ENCODE measurements at regions of chr3 and their contacts with region 1.

Region 1: DNA sequence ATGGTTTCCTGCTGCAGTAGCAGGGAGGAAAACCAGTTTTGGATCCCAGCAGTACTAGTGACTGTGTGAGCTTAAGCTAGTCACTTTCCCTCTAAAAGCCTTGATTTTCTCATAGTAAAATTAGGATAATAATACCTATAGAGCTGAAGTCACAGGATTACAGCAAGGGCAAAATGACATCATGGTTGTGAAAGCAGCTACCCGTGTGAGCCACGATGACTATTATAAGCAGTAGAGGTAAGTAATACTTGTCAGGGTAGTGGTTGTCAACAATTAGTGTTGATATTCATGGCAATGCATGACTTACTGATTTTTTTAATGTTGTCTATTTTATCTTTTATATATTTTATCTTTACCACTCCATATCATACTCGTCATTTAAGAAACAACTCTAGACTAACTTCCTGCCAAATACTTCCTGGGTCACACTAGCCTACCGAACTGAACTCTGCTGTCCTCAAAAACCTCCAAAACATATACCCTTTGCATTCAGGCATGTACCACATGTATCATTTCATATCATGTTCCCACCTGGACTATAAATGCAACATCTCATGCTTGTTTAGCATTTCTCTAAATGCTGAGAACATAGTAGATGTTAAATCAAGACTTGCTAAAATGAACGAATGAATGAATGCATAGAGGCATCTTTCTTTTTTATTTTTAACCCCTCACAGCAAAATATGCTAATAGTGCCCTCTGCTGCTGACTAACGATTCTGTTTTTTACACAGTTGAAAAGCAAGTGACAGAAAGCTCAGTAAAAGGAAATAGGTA is 172.6 kb downstream of the P3H2 start:
- DNase-seq: no peak
- ATAC-seq: no peak
- H3K4me3 ChIP-seq: no peak overlapping the region
- H3K4me3 Mint-ChIP-seq: no peak overlapping the region
- H3K27ac ChIP-seq: no peak overlapping the region
- H3K27ac Mint-ChIP-seq: no peak overlapping the region
- H3K4me1 ChIP-seq: no peaks in the 10 kb centered on the region
- H3K4me1 Mint-ChIP-seq: no peaks in the 10 kb centered on the region
- H3K27me3 ChIP-seq: no peaks in the 10 kb centered on the region
- H3K27me3 Mint-ChIP-seq: peaks cover 14% of the 10 kb centered on the region
- CTCF ChIP-seq: no peak

Region 2: GRCh38 chr3:189272504-189273119 is 675.5 kb before region 1 on chr3:
- CTCF ChIA-PET with region 1: interaction called, 11 read pairs
- POLR2A ChIA-PET with region 1: no interaction called
- intact Hi-C with region 1: loop called (anchors 2 kb)
- DNase-seq: no peak
- ATAC-seq: no peak
- H3K4me3 ChIP-seq: no peak overlapping the region
- H3K4me3 Mint-ChIP-seq: no peak overlapping the region
- H3K27ac ChIP-seq: no peak overlapping the region
- H3K27ac Mint-ChIP-seq: no peak overlapping the region
- H3K4me1 ChIP-seq: peaks cover 0 to 5% of the 10 kb centered on the region in 2 donors
- H3K4me1 Mint-ChIP-seq: peaks cover 10% of the 10 kb centered on the region
- H3K27me3 ChIP-seq: no peaks in the 10 kb centered on the region
- H3K27me3 Mint-ChIP-seq: peaks cover 10% of the 10 kb centered on the region
- CTCF ChIP-seq: no peak

Region 3: GRCh38 chr3:189961525-189962161 is 13.5 kb after region 1 on chr3:
- CTCF ChIA-PET with region 1: interaction called, 19 read pairs
- POLR2A ChIA-PET with region 1: no interaction called
- intact Hi-C with region 1: no loop called
- DNase-seq: peak; percentile 49
- ATAC-seq: peak; percentile 58
- H3K4me3 ChIP-seq: no peak overlapping the region
- H3K4me3 Mint-ChIP-seq: no peak overlapping the region
- H3K27ac ChIP-seq: no peak overlapping the region
- H3K27ac Mint-ChIP-seq: no peak overlapping the region
- H3K4me1 ChIP-seq: no peaks in the 10 kb centered on the region
- H3K4me1 Mint-ChIP-seq: peaks cover 1% of the 10 kb centered on the region
- H3K27me3 ChIP-seq: no peaks in the 10 kb centered on the region
- H3K27me3 Mint-ChIP-seq: peaks cover 16% of the 10 kb centered on the region
- CTCF ChIP-seq: peak; percentile 97

Measured in B cell (primary cell).